Dorsolateral prefrontal cortex (tissue), 120 donors: ENCODE measurements at regions of chr7 and their contacts with region 1.

Region 1: DNA sequence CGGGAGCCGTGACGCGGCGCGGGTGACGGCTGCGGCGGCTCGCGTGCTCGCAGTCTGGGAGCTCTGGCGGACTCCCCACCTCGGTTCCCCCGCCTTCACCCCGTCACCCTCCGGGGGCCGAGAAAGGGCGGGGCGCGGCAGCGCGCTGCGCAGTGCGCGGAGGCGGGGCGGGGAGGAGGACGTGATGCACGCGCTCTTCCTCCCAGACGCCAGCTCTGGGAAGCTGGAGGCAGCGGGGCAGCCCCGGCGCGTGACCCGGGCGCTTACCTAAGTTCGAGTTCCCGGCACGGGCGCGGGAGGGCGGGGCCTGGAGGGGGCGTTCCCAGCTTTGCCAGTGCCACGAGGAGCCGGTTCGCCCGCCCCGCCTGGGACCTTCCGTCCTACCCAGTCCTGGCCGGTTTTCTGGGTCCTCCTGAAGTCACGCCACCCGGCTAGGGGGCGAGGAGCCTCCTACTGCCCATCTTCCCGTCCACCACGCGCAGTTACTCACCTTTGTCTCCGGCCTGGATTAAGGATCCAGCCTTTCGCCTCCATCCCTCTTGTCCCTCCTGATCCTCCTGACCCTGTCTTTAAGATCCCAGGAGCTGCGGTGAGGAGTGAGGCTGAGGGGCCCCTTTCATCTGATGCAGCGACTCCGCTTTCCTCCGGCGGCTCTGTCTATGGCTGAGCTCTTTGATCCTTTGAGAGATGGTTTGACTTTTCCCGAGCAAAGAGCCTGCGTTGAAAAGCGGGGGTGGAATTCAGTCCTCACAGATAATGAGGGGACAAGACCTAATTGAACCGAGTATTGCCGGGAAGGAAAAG is 470 bp upstream of the NAMPT start:
- DNase-seq: peak; percentile 82 to 97 (median 94)
- H3K4me3 ChIP-seq: peak overlapping the region; percentile 63 to 98 (median 86)
- H3K27ac ChIP-seq: peak overlapping the region; percentile 80 to 98 (median 94)
- H3K27me3 ChIP-seq: no peaks in the 10 kb centered on the region
- CTCF ChIP-seq: peak in 20 of 56 donors; percentile 5 to 50 (median 18)

Region 2: DNA sequence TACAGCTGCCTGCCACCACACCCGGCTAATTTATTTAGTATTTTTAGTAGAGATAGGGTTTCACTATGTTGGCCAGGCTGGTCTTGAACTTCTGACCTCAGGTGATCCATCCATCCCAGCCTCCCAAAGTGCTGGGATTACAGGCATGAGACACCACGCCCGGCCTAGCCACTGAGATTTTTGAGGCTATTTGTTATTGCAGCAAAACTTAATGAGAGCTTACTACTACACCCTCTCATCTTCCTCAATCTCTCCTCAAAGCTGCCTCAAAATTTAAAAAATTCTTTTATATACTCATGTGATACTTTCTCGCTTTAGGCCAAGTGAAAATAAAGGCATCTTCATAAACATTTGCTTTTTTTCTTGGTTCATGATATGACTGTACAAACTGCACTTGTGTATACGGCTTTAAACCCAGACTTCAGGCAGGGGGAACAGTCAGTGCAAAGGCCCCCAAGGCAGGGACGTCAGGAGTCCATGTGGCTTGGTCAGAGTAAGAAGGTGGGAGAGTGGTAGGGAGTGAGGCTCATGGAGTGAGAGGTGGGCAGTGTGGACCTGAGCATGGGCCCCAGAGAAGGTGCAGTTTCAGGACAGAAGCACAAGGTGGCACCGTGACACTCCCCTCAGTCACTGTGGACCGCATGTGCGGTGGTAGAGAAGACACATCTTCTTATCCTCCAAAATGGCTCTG is 228.6 kb before region 1 on chr7:
- intact Hi-C with region 1: loop called (anchors 10 kb)
- DNase-seq: peak; percentile 58 to 83 (median 76)
- H3K4me3 ChIP-seq: no peak overlapping the region
- H3K27ac ChIP-seq: peak overlapping the region in 18 of 59 donors; percentile 81 to 96 (median 92)
- H3K27me3 ChIP-seq: no peaks in the 10 kb centered on the region
- CTCF ChIP-seq: peak; percentile 35 to 97 (median 91)

Region 3: DNA sequence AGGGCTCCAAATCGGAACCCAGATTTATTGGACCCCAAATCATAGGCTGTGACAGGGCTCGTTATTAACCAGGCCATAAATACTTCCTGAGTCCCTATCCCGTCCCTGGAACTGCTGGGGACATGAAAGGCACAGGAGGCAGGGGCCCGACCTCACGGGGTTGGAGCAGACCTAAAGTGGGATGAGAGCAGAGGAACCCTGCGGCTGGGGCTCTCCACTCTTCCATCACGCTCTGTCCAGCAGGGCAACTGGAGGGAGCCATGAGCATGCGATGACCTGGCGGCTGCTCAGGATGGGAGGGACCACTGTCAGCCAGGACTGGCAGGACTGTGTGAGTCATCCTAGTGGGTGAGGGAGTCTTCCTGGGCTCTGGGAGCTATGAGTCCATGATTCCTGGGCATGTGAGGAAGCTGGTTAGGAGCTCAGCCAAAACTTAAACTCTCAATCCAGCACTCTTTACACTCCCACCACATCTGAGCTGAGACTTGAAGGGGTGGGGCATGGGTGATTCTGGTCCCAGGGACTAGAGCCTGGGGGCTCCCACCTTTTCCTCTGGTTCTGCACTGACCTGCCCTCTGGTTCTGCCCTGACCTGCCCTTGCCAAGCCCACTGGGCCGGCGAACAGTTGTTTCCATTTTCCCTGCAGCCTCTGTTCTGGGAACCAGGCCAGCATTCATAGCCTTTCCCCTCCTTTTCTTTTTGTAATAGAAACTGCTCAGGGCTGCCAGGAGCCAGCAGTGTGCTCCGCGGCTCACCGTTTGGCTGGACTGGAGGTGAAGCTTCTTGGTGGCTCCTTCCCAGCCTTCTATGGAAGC is 220.3 kb before region 1 on chr7:
- intact Hi-C with region 1: loop called in 1 of 2 experiments (anchors 10 kb)
- DNase-seq: peak; percentile 38 to 91 (median 78)
- H3K4me3 ChIP-seq: peak overlapping the region in 54 of 59 donors; percentile 0 to 58 (median 38)
- H3K27ac ChIP-seq: peak overlapping the region; percentile 2 to 86 (median 73)
- H3K27me3 ChIP-seq: no peaks in the 10 kb centered on the region
- CTCF ChIP-seq: peak in 8 of 56 donors; percentile 4 to 21 (median 12)

Region 4: DNA sequence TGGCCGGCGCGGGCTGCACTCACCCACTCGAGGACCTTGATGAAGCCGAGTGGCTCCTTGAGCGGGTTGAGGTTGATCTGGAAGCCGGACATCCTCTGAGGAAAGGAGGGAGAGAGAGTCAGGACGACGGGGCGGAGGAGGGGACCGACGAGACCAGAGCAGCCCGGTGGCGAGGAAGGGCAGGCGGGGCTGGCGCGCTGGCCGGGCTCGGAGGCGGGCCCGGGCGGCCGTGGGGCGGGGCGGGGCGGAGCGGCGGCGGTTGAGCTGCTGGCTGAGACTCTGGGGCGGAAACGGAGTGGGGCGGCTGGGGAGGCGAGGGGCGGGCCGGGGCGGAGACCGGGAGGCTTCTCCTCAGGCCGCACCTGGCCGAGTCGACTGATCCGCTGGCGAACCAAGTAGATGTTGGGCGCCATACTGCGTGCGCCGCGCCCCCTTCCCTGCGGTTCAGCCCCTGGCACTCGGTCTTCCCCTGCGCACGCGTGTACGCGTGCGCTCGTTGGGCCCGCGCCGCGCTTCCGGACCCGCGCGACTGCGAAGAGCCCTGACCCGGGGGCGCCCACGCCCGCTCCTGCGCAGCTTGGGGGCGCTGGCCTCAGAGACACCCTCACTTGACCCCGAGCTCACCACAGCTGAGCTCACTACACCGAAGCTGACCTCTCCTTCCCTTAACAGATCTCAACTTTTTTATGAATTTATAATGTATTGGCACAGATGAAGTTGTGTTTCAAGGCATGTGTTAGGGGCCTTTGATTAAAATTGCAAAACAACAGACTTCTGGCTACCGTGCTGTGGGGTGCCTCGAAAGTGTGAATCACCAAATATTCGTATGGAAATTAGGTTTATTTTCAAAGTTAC is 172.9 kb before region 1 on chr7 and contains the start of gene SYPL1:
- intact Hi-C with region 1: loop called (anchors 2 to 10 kb)
- DNase-seq: peak; percentile 66 to 92 (median 82)
- H3K4me3 ChIP-seq: peak within 1 kb of the TSS; percentile 59 to 93 (median 80)
- H3K27ac ChIP-seq: peak within 1 kb of the TSS; percentile 65 to 99 (median 95)
- H3K27me3 ChIP-seq: no peaks in the 10 kb centered on the region
- CTCF ChIP-seq: peak in 47 of 56 donors; percentile 7 to 65 (median 37)
- total RNA-seq, gene SYPL1: 21.3 to 84.1 (median 36.2) TPM

Region 5: GRCh38 chr7:106176414-106177299 is 108.6 kb before region 1 on chr7:
- intact Hi-C with region 1: loop called (anchors 5 to 10 kb)
- DNase-seq: peak; percentile 75 to 89 (median 84)
- H3K4me3 ChIP-seq: no peak overlapping the region
- H3K27ac ChIP-seq: peak overlapping the region in 31 of 59 donors; percentile 16 to 76 (median 48)
- H3K27me3 ChIP-seq: no peaks in the 10 kb centered on the region
- CTCF ChIP-seq: peak; percentile 77 to 99 (median 94)

Region 6: DNA sequence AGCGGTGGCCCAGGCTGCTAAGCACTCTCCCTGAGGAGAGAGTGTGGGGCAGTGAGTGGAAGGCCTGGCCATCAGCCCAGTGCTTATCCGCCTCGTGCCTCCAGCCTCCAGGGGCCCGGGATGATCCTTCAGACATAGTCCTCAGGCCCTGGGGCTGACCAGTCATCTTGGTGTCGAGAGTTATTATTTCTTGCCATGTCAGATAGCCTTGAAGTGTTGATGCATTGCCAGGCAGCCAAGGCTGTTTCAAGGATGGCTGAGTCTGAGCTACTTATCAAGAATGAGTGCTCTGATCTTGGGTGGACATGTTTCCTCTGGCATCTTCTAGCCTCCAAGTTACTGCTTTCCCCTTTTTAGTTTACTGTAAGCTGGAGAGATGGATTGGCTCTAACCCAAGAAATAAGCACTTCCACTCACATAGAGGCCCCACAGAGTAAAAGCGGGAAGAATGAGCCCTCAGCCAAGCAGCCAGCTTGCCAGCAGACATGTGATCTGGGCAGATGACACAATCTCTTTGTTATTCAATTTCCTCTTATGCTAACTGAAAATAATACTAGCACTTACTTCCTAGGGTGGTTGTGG is 136.0 kb after region 1 on chr7:
- intact Hi-C with region 1: loop called in 1 of 2 experiments (anchors 2 kb)
- DNase-seq: peak in 5 of 10 donors; percentile 25 to 60 (median 52)
- H3K4me3 ChIP-seq: peak overlapping the region in 2 of 59 donors; percentile 14 to 22
- H3K27ac ChIP-seq: peak overlapping the region in 43 of 59 donors; percentile 4 to 80 (median 55)
- H3K27me3 ChIP-seq: no peaks in the 10 kb centered on the region
- CTCF ChIP-seq: no peak

Region 7: DNA sequence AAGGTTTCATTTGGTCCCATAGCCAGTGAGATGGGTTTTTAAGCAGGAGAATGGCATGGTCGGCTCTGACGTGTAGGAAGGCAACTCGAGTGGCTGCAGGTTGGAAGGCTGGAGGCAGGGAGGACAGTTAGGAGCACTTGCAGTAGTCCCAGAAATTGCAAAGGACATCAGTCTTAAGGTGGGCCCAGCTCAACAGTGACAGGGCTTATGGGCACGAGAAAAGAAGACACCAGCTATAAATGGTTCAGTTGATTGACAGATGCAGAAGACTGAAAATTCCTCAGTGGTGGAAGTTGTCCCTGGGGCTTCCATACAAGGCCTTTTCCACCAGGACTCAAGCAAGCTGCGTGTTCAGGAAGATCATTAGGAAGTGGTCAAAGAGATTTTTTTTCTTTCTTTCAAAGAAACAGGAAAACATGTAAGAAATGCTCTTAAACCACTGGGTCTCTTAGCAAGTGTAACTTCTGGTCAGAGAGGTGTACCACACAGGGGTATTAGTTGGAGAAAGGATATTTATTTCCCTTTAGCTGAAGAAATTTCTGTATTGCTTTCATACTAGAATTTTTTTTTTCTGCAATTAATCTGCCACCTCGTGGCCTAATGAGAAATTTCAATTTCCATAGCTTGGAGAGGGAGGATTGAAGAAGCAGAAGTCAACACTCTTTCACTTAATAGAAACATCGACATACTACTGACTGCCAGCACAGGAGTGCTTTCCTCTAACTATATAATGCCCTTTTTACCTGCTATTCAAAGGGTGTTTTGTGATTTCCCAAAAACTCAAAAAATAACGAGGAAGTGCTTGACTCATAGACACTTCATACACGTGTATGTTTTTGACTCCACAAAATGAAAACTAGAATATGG is 177.0 kb after region 1 on chr7:
- intact Hi-C with region 1: loop called in 1 of 2 experiments (anchors 5 kb)
- DNase-seq: no peak
- H3K4me3 ChIP-seq: no peak overlapping the region
- H3K27ac ChIP-seq: no peak overlapping the region
- H3K27me3 ChIP-seq: no peaks in the 10 kb centered on the region
- CTCF ChIP-seq: peak; percentile 54 to 93 (median 78)